PC-9 (cell line): ENCODE measurements at regions of chr17 and their contacts with region 1.

Region 1: GRCh38 chr17:4966844-4967538 is 626 bp downstream of the SPAG7 start:
- DNase-seq: peak; percentile 99
- H3K4me3 ChIP-seq: peak overlapping the region; percentile 72
- H3K27ac ChIP-seq: peak overlapping the region; percentile 95
- H3K4me1 ChIP-seq: peaks cover 25% of the 10 kb centered on the region
- H3K27me3 ChIP-seq: no peaks in the 10 kb centered on the region
- CTCF ChIP-seq: no peak

Region 2: GRCh38 chr17:4920351-4921048 is 46.5 kb before region 1 on chr17:
- CTCF ChIA-PET with region 1: no interaction called
- POLR2A ChIA-PET with region 1: interaction called, 13 read pairs
- intact Hi-C with region 1: no loop called
- DNase-seq: no peak
- H3K4me3 ChIP-seq: no peak overlapping the region
- H3K27ac ChIP-seq: no peak overlapping the region
- H3K4me1 ChIP-seq: no peaks in the 10 kb centered on the region
- H3K27me3 ChIP-seq: no peaks in the 10 kb centered on the region
- CTCF ChIP-seq: no peak

Region 3: GRCh38 chr17:4939796-4940624 is 27.0 kb before region 1 on chr17 and contains the starts of genes RNF167 and SLC25A11:
- CTCF ChIA-PET with region 1: interaction called, 4 read pairs
- POLR2A ChIA-PET with region 1: interaction called, 19 read pairs
- intact Hi-C with region 1: loop called (anchors 1 kb)
- DNase-seq: peak; percentile 98
- H3K4me3 ChIP-seq: peak within 1 kb of the TSS; percentile 93
- H3K27ac ChIP-seq: peak within 1 kb of the TSS; percentile 87
- H3K4me1 ChIP-seq: peaks cover 25% of the 10 kb centered on the region
- H3K27me3 ChIP-seq: no peaks in the 10 kb centered on the region
- CTCF ChIP-seq: no peak
- total RNA-seq, gene RNF167: 122 and 135 TPM in 2 replicates
- total RNA-seq, gene SLC25A11: 50.7 and 56.2 TPM in 2 replicates

Region 4: DNA sequence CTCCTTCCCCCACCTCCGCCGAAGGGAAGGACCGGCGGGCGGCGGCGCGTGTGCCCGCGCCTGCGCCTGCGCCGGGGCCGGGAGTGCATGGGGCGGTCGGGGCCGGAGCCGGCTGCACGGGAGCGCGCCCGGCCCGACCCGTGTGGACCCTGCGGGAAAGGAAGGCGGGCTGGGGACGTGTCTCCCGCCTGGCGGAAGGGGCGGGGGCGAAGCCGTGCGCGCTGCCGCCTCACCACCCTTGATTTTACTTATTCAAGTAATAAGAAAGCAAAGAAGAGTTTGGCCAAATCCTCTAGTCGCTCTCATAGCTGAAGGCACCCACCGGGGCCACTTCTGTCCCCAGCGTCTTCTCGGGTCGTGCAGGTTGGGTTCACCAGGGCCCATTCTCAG is 18.1 kb before region 1 on chr17:
- CTCF ChIA-PET with region 1: interaction called, 4 read pairs
- POLR2A ChIA-PET with region 1: interaction called, 42 read pairs
- intact Hi-C with region 1: loop called (anchors 1 kb)
- DNase-seq: peak; percentile 71 to 92
- H3K4me3 ChIP-seq: peak overlapping the region; percentile 99
- H3K27ac ChIP-seq: peak overlapping the region; percentile 99
- H3K4me1 ChIP-seq: peaks cover 39% of the 10 kb centered on the region
- H3K27me3 ChIP-seq: no peaks in the 10 kb centered on the region
- CTCF ChIP-seq: no peak

Region 5: DNA sequence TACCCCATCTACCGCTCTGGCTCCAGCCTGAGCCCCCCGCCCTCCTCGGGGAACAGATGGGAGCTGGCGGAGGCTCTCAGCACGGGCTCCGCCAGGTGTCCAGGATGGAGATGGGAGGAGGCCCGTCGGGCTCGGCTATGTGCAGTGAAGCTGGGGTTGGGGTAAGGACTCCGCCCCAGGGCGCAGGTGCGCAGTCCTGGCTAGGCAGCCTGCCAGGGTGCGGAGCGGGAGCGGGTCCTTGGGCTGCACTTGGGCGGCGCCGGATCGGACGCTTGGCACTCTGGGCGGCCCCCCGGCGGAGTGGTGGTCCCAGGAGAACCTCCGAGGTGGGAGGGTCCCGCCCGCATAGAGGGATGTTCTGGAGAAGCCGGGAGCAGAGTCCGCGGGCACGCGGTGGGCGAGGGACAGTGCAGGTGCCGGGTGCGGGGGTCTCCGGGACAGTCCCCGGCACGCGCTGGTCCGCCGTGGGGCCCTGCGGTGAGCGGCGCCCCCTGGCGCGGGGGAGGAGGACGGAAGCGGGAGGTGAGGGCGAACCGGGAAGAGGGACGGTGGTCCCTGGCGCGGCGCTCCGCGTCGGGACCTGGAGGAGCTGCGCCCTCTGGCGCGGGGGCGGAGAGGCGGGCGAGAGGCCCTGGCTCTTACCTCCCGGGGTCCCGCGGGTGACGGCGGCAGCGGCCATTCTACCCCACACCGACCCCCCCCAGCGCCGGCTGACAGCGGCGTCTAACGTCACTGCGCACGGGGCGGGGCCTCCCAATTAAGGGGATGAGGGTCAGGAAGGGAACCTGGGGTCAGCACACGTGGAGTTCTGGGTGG is 20.2 kb after region 1 on chr17 and contains the start of gene CAMTA2:
- CTCF ChIA-PET with region 1: interaction called, 10 read pairs
- POLR2A ChIA-PET with region 1: interaction called, 7 read pairs
- intact Hi-C with region 1: loop called (anchors 1 kb)
- DNase-seq: peak; percentile 57 to 82
- H3K4me3 ChIP-seq: peak within 1 kb of the TSS; percentile 95
- H3K27ac ChIP-seq: peak within 1 kb of the TSS; percentile 25
- H3K4me1 ChIP-seq: peaks cover 23% of the 10 kb centered on the region
- H3K27me3 ChIP-seq: no peaks in the 10 kb centered on the region
- CTCF ChIP-seq: peak; percentile 79
- total RNA-seq, gene CAMTA2: 49.2 and 51.1 TPM in 2 replicates

Region 6: DNA sequence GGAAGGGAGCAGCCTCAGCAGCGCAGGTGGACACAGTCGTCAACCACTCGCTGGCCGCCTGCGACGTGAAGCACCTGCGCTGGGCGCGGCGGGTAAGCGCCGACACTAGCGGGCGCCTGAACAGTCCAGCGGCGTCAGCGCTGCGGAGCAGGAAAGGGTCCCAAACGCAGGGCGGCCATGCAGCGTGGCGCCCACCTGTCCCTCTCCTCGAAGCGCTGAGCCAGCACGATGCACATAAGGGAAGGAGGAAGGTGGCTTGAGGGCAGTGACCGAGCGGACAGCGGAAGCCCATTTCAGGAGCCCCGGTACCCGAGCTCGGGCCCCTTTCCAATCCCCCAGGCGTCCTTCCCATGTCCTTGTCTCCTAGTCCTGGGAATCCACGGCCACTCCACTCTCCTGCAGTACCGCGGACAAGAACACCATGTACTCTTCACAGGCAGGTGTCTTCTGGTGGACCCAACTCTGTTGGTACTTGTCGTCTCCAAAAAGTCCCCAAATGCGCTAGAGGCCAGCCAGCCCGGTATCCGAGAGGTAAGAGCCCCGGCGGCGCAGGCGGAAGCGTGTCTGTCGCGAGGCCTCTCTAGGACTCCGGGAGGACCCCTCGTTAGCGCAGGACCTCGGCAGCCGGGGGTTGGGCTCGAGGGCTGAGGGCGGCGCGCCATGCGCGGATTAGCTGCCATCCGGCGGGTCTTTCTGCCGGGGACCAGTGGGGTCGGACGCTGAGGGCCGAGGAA is 130.3 kb after region 1 on chr17:
- CTCF ChIA-PET with region 1: no interaction called
- POLR2A ChIA-PET with region 1: no interaction called
- intact Hi-C with region 1: no loop called
- DNase-seq: no peak
- H3K4me3 ChIP-seq: no peak overlapping the region
- H3K27ac ChIP-seq: no peak overlapping the region
- H3K4me1 ChIP-seq: no peaks in the 10 kb centered on the region
- H3K27me3 ChIP-seq: peaks cover 12% of the 10 kb centered on the region; the same call in 1 of the 2 replicates
- CTCF ChIP-seq: no peak

Region 7: DNA sequence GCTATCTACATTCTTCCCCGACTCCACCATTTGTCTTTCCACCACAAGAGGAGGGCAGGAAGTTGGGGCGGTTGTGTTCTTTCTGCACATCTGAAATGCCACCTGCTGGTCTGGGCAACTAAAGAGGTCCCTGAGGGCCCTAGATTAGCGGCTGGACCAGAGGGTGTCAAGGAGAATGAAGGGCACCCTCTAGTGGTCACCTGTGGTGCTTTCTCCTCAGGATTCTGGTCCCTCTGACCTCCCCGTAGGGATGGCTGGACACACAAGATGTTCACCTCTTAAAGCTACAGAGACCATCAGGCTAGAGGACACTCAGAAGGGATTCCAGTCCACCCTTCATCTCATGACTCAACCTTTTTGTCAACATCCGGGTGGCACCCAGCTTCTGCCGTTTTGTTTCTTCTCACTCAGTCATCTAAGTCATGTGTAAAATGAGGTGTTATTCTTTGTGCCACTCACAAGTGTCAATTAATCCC is 270.6 kb after region 1 on chr17:
- CTCF ChIA-PET with region 1: no interaction called
- POLR2A ChIA-PET with region 1: no interaction called
- intact Hi-C with region 1: no loop called
- DNase-seq: peak; percentile 64 to 68
- H3K4me3 ChIP-seq: no peak overlapping the region
- H3K27ac ChIP-seq: no peak overlapping the region
- H3K4me1 ChIP-seq: no peaks in the 10 kb centered on the region
- H3K27me3 ChIP-seq: no peaks in the 10 kb centered on the region
- CTCF ChIP-seq: peak; percentile 79